Activated naive CD4-positive, alpha-beta T cell treated with anti-CD3 and anti-CD28 coated beads for 36 hours (primary cell): ENCODE measurements at regions of chr21 and their contacts with region 1.

Region 1: DNA sequence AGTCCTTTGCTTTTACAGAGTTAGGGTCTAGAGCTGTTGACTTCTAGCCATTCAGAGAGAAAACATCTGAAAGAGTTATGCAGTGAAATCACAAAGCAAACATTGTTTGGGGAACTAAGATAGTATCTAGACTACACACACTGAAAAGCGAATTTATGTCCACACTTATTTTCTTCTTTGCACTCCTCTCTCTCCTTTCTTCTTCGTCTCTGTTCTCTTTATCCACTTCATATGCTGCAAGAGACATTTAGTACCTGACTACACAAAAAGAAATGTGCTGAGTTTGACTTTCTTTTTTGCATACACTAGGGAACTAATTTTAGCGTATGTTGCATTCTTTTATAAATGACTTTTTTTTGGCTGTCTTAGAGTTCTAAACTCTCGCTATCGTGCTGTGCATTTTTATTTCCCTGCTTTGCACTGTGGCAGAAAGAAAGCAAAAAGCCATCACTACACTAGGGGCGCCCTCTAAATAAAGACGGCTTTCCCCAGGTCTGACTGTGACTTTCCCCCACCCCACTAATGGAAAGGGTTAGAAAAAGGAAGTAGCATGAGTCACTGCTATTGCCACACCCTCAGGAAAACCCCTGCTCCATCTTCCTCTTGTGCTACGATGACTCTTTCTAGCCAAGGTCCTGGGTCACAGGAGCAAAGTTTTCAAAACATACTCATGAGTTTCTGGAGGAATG is 65.7 kb downstream of the MAP3K7CL start:
- DNase-seq: peak; percentile 91
- H3K4me3 Mint-ChIP-seq: peak overlapping the region; percentile 63
- H3K27ac Mint-ChIP-seq: peak overlapping the region; percentile 90
- H3K4me1 Mint-ChIP-seq: peaks cover 36% of the 10 kb centered on the region
- H3K27me3 Mint-ChIP-seq: no peaks in the 10 kb centered on the region

Region 2: DNA sequence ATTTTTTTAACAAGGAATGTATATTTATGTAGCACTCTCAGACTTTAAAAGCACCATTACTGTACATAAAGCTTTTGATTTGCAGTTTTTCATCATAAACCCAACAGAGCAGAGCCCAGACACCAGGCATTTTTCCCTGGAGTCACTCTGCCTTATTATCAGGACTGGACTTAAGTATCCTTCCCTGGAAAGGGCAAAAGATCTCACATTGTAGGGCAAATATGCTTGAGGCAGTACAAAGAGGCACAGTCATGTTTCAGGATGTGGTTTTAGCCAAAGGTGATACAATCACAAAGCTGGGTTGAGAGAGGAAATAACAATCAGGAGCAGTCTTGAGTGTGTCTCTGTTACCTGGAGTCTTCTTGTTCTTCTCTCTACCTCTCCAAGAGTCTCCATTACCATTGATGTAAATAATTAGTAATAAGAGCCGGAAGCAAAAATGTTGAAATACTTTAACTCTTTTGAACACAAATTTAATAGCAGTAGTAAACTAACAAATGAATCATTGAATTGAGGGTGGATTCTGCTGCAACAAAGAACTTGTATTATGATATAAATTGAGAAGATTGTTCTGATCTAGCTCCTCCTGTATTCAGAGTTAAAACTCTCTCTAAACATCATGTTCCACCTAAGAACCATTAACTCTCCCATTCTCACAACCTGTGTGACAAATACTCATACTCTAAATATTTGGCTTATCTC is 364.0 kb before region 1 on chr21:
- CTCF ChIA-PET with region 1: no interaction called
- intact Hi-C with region 1: loop called (anchors 10 kb)
- DNase-seq: peak; percentile 36
- H3K4me3 Mint-ChIP-seq: no peak overlapping the region
- H3K27ac Mint-ChIP-seq: no peak overlapping the region
- H3K4me1 Mint-ChIP-seq: peaks cover 57% of the 10 kb centered on the region
- H3K27me3 Mint-ChIP-seq: no peaks in the 10 kb centered on the region

Region 3: DNA sequence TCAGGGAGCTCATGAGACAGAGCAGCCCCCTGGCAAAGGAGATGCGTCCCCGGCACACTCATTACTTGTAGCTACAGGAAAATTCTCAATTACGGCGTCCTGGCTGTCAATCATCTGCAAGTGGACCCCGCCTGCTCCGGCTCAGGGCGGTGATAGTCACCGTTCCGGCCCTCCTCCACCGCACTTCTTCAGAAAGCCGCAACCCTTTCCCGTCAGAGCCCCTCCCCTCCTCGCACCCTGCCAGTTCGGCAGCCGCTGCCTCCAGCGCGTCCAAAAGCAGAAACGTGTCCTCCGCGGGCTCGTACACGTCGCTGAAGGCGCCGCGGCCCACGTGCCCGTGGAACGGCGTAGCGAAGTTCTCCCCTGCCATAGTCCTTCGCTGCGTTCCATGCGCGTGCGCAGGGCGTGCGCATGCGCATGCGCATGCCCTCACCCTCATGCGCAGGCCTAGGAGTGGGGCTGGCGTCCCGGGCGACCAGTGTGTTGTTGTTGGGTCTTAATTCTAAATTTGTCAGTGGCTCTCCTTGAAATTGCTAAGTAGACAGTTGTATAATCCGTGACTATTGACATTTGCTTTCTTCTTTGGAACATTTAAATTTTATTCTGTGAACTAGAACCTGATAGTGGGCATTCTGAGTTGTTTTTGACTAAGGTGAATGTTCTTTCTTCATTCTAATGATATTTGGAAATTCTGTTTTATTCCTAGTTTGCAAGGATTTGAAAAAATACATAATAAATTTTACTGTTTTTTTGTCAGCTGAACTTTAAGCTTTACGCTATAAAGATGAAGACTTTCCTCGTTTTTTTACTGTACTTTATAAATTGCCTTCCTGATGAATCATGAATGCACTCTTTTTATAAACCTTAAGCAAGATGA is 310.9 kb before region 1 on chr21:
- CTCF ChIA-PET with region 1: no interaction called
- intact Hi-C with region 1: no loop called
- DNase-seq: peak; percentile 92
- H3K4me3 Mint-ChIP-seq: peak overlapping the region; percentile 90
- H3K27ac Mint-ChIP-seq: peak overlapping the region; percentile 97
- H3K4me1 Mint-ChIP-seq: peaks cover 7% of the 10 kb centered on the region
- H3K27me3 Mint-ChIP-seq: no peaks in the 10 kb centered on the region

Region 4: GRCh38 chr21:29024474-29025327 is 171.4 kb before region 1 on chr21 and contains the start of gene USP16:
- CTCF ChIA-PET with region 1: no interaction called
- intact Hi-C with region 1: loop called (anchors 1 kb)
- DNase-seq: peak; percentile 95
- H3K4me3 Mint-ChIP-seq: peak within 1 kb of the TSS; percentile 88
- H3K27ac Mint-ChIP-seq: peak within 1 kb of the TSS; percentile 98
- H3K4me1 Mint-ChIP-seq: peaks cover 42% of the 10 kb centered on the region
- H3K27me3 Mint-ChIP-seq: no peaks in the 10 kb centered on the region
- total RNA-seq, gene USP16: 36.1 to 36.7 TPM

Region 5: DNA sequence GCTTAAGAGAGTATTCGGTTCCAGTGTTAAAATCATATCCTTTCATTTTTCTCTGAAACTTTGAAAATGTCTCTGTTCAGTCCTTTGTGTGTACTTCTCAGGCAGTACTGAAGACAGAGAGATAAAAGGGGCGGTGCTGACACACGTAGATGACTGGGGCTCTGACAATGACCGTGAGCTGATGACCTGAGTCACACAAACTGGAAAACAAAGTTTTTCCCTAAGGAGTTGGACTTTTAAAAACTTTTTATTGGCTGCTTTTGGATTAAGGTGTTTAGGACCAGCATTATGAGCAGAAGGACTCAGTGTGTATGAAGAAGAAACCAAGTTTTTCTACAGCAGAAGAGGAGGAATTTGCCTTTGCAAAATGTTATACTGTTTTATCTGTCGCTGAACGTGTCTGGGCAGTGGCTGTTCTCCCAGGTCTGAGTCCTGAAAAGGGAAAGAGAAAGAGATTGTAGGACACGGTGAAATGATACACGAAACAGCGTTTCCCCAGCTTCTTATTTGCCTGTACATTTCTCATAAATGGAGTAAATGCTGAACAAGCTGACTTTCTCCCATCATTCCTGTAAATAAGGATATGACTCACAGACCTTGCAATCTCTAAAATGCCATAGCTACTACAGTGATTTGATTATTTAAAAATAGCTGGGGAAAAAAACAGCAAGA is 14.2 kb before region 1 on chr21:
- CTCF ChIA-PET with region 1: interaction called, 3 read pairs
- intact Hi-C with region 1: loop called (anchors 1 kb)
- DNase-seq: peak; percentile 37
- H3K4me3 Mint-ChIP-seq: peak overlapping the region; percentile 45
- H3K27ac Mint-ChIP-seq: peak overlapping the region; percentile 93
- H3K4me1 Mint-ChIP-seq: peaks cover 14% of the 10 kb centered on the region
- H3K27me3 Mint-ChIP-seq: no peaks in the 10 kb centered on the region

Region 6: DNA sequence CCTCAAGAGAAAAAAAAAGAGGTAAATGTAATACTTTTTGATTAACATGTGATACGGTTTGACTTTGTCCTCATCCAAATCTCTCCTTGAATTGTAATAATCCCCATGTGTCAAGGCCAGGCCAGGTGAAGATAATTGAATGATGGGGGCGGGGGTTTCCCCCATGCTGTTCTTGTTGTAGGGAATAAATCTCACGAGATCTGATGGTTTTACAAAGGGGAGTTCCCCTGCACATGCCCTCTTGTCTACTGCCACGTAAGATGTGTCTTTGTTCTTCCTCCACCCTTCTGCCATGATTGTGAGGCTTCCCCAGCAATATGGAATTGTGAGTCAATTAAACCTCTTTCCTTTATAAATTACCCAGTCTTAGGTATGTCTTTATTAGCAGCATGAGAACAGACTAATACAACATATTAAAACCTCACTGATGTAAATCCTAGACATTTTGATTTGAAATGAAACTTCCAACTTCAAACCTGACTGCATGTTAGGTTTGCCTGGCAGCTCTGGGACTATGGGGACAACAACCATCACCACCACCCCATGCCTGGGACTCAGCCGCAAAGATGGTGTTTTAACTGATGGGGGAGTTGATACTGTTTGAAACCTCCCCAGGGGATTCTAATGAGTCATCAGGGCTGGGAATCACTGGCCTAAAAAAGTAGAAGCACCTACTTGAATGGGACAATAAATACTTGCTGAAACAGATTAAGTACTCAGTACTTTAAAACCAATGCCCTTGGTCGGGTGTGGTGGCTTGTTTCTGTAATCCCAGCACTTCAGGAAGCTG is 69.8 kb after region 1 on chr21:
- CTCF ChIA-PET with region 1: no interaction called
- intact Hi-C with region 1: loop called (anchors 2 kb)
- DNase-seq: peak; percentile 75
- H3K4me3 Mint-ChIP-seq: no peak overlapping the region
- H3K27ac Mint-ChIP-seq: peak overlapping the region; percentile 51
- H3K4me1 Mint-ChIP-seq: peaks cover 15% of the 10 kb centered on the region
- H3K27me3 Mint-ChIP-seq: no peaks in the 10 kb centered on the region

Region 7: GRCh38 chr21:29406385-29406784 is 210.3 kb after region 1 on chr21:
- CTCF ChIA-PET with region 1: no interaction called
- intact Hi-C with region 1: no loop called
- DNase-seq: no peak
- H3K4me3 Mint-ChIP-seq: no peak overlapping the region
- H3K27ac Mint-ChIP-seq: no peak overlapping the region
- H3K4me1 Mint-ChIP-seq: no peaks in the 10 kb centered on the region
- H3K27me3 Mint-ChIP-seq: no peaks in the 10 kb centered on the region

Region 8: DNA sequence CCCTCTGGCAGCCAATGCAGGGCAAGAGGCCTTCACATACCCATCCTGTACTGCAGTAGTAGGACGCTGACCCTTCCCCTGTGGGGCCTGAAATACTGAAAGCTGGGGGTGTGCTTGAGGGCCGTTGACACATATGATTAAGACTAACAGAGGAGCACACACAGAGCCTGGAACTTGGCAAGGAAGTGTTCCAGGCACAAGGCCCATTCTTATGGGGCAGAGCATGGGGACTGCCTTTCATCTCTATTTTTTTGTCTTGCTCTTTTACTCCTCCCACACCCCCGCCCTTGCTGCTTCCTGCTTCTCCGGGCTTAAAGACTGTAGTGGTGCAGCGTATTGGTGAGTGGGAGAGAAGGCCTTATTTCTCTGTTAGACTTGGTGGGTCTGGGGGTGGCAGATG is 240.0 kb after region 1 on chr21:
- CTCF ChIA-PET with region 1: no interaction called
- intact Hi-C with region 1: loop called (anchors 2 kb)
- DNase-seq: peak; percentile 78
- H3K4me3 Mint-ChIP-seq: peak overlapping the region; percentile 76
- H3K27ac Mint-ChIP-seq: peak overlapping the region; percentile 83
- H3K4me1 Mint-ChIP-seq: peaks cover 50% of the 10 kb centered on the region
- H3K27me3 Mint-ChIP-seq: no peaks in the 10 kb centered on the region